ENCODE measurements at regions of chr11 and their contacts with region 1.

Region 1: GRCh38 chr11:76919887-76920746 is 59.4 kb downstream of the ACER3 start:
- DNase-seq: peak; percentile 73
- ATAC-seq: peak; percentile 80
- H3K4me3 Mint-ChIP-seq: no peak overlapping the region
- H3K27ac Mint-ChIP-seq: no peak overlapping the region
- H3K4me1 Mint-ChIP-seq: no peaks in the 10 kb centered on the region
- H3K27me3 Mint-ChIP-seq: no peaks in the 10 kb centered on the region

Region 2: GRCh38 chr11:76734456-76735420 is 185.4 kb before region 1 on chr11:
- CTCF ChIA-PET with region 1: interaction called, 51 read pairs
- POLR2A ChIA-PET with region 1: no interaction called
- intact Hi-C with region 1: loop called (anchors 1 to 2 kb)
- DNase-seq: no peak
- ATAC-seq: no peak
- H3K4me3 Mint-ChIP-seq: no peak overlapping the region
- H3K27ac Mint-ChIP-seq: no peak overlapping the region
- H3K4me1 Mint-ChIP-seq: no peaks in the 10 kb centered on the region
- H3K27me3 Mint-ChIP-seq: no peaks in the 10 kb centered on the region

Region 3: DNA sequence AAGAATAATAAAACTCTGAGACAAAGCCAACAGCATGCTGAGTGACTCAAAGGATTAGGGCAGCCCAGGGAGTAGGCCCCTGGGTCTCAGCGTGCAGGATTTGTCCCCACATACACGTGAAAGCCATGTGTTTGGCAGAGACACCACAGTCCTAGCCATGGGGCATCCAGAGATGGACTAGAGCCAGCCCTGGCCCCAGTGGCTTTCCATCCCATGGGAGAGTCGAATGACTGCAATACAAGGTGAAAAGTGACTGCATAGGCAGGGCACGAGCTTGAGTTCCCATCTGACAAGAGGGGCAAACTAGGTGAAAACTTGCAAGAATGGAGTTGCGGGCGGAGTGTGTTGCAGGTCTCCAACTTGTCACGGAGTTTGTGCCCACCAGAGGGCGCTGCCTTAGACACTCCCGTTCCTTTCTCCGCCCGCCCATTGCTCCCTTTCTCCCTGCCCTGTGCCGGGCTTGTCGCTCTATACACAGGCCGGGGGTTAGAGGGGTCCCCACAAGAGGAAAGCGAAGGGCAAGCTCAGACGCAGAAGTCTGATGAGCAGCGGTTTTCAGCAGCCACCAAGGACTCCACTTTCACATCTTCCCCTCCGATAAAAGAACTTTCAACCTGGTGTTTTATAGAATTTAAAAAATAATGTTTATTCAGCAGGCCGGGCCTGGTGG is 112.8 kb before region 1 on chr11:
- CTCF ChIA-PET with region 1: interaction called, 100 read pairs
- POLR2A ChIA-PET with region 1: interaction called, 8 read pairs
- intact Hi-C with region 1: loop called (anchors 1 kb)
- DNase-seq: peak; percentile 91
- ATAC-seq: peak; percentile 21
- H3K4me3 Mint-ChIP-seq: no peak overlapping the region
- H3K27ac Mint-ChIP-seq: no peak overlapping the region
- H3K4me1 Mint-ChIP-seq: peaks cover 31% of the 10 kb centered on the region
- H3K27me3 Mint-ChIP-seq: peaks cover 12% of the 10 kb centered on the region

Region 4: DNA sequence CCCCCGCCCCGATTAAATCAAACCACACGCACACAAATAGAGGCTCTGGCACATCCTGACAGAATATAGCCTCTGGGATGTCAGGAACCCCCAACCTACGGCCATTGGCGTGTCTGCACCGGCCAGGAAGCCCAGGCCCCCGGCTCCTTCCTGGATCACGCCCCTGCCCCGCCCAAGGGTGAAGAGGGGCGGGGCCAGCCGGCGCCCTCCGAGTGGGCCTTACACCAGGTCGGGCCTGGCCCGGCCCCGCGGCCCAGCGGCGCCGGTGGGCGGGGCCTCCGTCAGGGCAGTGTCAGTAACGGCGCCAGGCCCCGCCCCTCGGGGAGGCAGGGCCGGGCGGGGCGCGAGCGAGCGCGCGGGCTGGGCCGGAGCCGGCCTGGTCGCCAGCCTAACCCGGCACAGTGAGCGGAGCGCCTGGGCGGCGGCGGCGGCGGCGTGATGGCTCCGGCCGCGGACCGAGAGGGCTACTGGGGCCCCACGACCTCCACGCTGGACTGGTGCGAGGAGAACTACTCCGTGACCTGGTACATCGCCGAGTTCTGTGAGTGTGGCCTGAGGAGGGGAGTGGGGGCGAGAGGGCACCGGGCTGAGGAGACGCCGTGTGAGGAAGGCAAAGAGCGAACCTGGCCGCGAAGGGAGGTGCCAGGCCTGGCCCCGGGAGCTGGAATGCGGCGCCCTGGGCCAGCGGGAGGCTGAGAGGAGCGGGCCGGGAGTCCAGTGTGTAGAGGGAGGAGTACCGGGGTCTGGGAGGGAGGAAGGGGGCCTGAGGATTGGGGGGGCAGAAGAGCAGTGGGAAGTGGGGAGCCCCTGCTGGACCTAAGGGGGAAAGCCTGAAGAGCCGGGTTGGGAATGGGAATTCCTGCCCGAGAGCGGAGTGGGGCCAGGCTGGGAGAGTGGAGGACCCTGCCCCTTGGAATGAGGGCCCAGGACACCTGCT is 59.3 kb before region 1 on chr11 and contains the start of gene ACER3:
- CTCF ChIA-PET with region 1: interaction called, 13 read pairs
- POLR2A ChIA-PET with region 1: no interaction called
- intact Hi-C with region 1: loop called in 1 of 2 experiments (anchors 2 kb)
- DNase-seq: peak; percentile 94
- ATAC-seq: peak; percentile 99
- H3K4me3 Mint-ChIP-seq: peak within 1 kb of the TSS; percentile 72
- H3K27ac Mint-ChIP-seq: peak within 1 kb of the TSS; percentile 70
- H3K4me1 Mint-ChIP-seq: peaks cover 20% of the 10 kb centered on the region
- H3K27me3 Mint-ChIP-seq: no peaks in the 10 kb centered on the region
- total RNA-seq, gene ACER3: 8.9 to 10.3 TPM

Region 5: GRCh38 chr11:76939211-76939631 is 19.1 kb after region 1 on chr11:
- CTCF ChIA-PET with region 1: interaction called, 10 read pairs
- POLR2A ChIA-PET with region 1: no interaction called
- intact Hi-C with region 1: no loop called
- DNase-seq: no peak
- ATAC-seq: no peak
- H3K4me3 Mint-ChIP-seq: no peak overlapping the region
- H3K27ac Mint-ChIP-seq: no peak overlapping the region
- H3K4me1 Mint-ChIP-seq: no peaks in the 10 kb centered on the region
- H3K27me3 Mint-ChIP-seq: no peaks in the 10 kb centered on the region

Measured in activated CD4-positive, alpha-beta T cell treated with anti-CD3 and anti-CD28 coated beads for 36 hours (primary cell).